ENCODE measurements at regions of chr11 and their contacts with region 1.

Region 1: DNA sequence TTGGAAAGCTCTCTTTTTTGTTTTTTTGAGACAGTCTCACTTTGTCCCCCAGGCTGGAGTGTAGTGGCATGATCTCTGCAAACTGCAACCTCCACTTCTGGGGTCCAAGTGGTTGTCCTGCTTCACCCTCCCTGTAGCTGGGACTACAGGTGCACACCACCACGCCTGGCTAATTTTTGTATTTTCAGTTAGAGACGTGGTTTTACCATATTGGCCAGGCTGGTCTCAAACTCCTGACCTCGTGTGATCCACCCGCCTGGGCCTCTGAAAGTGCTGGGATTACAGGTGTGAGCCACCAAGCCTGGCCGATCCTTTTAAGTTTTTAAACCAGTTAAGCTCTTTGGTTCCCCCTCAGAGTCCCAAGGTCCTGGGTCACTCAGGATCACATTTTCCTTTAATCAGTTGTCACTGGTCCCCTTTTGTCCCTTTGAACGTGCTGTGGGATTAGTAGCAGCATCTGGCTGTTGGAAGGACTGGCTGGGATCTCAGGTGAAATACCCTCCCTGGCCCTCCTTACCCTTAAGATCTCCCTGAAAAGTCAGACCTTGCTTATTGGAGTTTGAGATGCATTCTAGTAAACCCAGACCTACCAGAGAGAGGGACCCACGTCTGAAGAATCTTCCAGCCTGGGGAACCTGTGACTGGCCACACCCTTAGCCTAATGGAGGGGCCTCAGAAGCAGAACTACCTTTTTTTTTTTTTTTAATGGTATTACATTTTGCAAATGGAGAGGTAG is 8.1 kb downstream of the MALAT1 start:
- DNase-seq: peak in 4 of 10 donors; percentile 26 to 75 (median 46)

Region 2: GRCh38 chr11:65366340-65366773 is 140.6 kb before region 1 on chr11:
- intact Hi-C with region 1: loop called (anchors 1 kb)
- DNase-seq: peak in 1 of 10 donors; percentile 27

Region 3: GRCh38 chr11:65382033-65382807 is 124.7 kb before region 1 on chr11 and contains the start of gene SLC25A45:
- intact Hi-C with region 1: loop called (anchors 1 kb)
- DNase-seq: peak; percentile 73 to 98 (median 84)